Activated T-helper 1 cell treated with anti-CD3 and anti-CD28 coated beads, Interleukin-12 subunit alpha, Interleukin-12 subunit beta, Interleukin-2, Interleukin-4 antibody, amounts not matched to agents 30 ng/mL and 10 ng/mL and 1 ng/mL, durations not matched to agents 14 hours and 24 hours and 36 hours (primary cell): ENCODE measurements at regions of chr1 and their contacts with region 1.

Region 1: GRCh38 chr1:59699227-59699847 is 115.4 kb upstream of the HOOK1 start:
- DNase-seq: no peak
- H3K4me3 Mint-ChIP-seq: no peak overlapping the region
- H3K27ac Mint-ChIP-seq: no peak overlapping the region
- H3K4me1 Mint-ChIP-seq: peaks cover 33% of the 10 kb centered on the region
- H3K27me3 Mint-ChIP-seq: no peaks in the 10 kb centered on the region

Region 2: DNA sequence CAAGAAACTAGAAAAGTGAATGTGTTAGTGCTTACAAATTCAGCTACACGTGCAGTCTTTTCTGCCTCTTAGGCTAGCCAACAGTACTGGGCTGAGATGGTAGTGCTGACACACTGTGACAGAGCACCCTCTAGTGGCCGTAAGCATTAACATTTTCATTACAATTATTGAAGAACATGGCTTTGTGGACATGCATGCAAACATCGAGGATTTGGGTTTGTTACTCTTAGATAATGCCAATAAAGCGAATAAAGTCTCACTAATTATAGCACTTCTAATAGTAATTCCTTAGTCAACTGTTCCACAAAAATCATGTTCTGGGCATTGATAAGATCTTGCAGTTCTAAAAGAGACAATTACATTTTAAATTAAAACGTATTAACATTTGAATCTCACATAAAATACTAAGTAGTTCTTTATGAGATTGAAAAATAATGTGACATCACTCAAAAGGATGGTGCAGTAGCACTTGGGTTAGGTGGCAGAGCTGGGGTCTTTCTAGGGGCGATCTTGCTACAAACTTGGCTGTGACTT is 1046.6 kb before region 1 on chr1:
- intact Hi-C with region 1: loop called (anchors 2 kb)
- DNase-seq: peak; percentile 43
- H3K4me3 Mint-ChIP-seq: no peak overlapping the region
- H3K27ac Mint-ChIP-seq: no peak overlapping the region
- H3K4me1 Mint-ChIP-seq: peaks cover 7% of the 10 kb centered on the region
- H3K27me3 Mint-ChIP-seq: no peaks in the 10 kb centered on the region

Region 3: GRCh38 chr1:58857680-58858673 is 841.4 kb before region 1 on chr1:
- intact Hi-C with region 1: loop called (anchors 2 kb)
- DNase-seq: peak; percentile 43
- H3K4me3 Mint-ChIP-seq: peak overlapping the region; percentile 61
- H3K27ac Mint-ChIP-seq: peak overlapping the region; percentile 95
- H3K4me1 Mint-ChIP-seq: peaks cover 74% of the 10 kb centered on the region
- H3K27me3 Mint-ChIP-seq: no peaks in the 10 kb centered on the region

Region 4: DNA sequence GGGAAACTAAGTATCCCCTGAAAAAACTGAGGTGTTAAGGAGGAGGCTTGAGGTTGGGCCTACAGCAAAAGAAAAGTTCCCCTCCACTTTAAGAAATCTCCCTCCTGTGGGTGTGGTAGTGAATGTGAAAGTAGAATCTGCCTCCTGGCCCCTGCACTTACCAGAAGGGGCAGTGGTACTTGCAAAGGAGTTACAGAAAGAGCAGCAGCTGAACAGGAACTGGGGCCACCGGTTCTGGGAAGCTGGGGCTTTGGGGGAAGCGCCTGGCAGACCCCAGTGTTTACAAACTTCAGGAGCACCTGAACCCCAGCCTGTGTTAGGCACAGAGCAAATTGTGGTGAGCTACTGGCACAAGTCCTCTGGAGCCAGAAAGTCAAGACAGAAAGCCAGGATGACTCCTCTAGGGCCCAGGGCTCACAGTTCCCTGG is 652.6 kb before region 1 on chr1:
- intact Hi-C with region 1: loop called (anchors 1 kb)
- DNase-seq: peak; percentile 62
- H3K4me3 Mint-ChIP-seq: peak overlapping the region; percentile 67
- H3K27ac Mint-ChIP-seq: peak overlapping the region; percentile 71
- H3K4me1 Mint-ChIP-seq: peaks cover 77% of the 10 kb centered on the region
- H3K27me3 Mint-ChIP-seq: no peaks in the 10 kb centered on the region

Region 5: DNA sequence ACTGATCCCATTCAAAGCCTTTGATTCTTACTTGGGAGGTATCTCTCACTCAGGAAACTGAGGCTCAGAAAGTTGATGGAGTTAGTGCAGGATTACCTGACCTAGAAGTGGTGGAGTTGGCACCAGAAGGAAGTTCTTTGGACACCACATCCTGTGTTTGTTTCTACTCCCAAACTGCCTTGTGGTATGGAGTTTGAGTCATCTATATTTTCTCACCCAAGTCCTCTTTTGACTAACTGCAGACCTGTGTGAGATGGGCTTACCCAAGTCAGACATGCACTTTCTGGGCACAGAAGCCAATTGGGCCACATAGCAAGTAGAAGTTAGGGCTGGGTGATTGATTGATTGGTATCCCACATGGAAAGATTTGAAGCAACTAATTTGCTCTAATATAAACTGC is 366.4 kb before region 1 on chr1:
- intact Hi-C with region 1: loop called (anchors 2 kb)
- DNase-seq: peak; percentile 47
- H3K4me3 Mint-ChIP-seq: peak overlapping the region; percentile 15
- H3K27ac Mint-ChIP-seq: peak overlapping the region; percentile 78
- H3K4me1 Mint-ChIP-seq: peaks cover 44% of the 10 kb centered on the region
- H3K27me3 Mint-ChIP-seq: no peaks in the 10 kb centered on the region

Region 6: GRCh38 chr1:59759156-59759925 is 60.0 kb after region 1 on chr1:
- intact Hi-C with region 1: loop called (anchors 1 kb)
- DNase-seq: peak; percentile 63
- H3K4me3 Mint-ChIP-seq: peak overlapping the region; percentile 13
- H3K27ac Mint-ChIP-seq: no peak overlapping the region
- H3K4me1 Mint-ChIP-seq: peaks cover 12% of the 10 kb centered on the region
- H3K27me3 Mint-ChIP-seq: no peaks in the 10 kb centered on the region

Region 7: GRCh38 chr1:59936358-59936821 is 237.1 kb after region 1 on chr1:
- intact Hi-C with region 1: no loop called
- DNase-seq: no peak
- H3K4me3 Mint-ChIP-seq: no peak overlapping the region
- H3K27ac Mint-ChIP-seq: no peak overlapping the region
- H3K4me1 Mint-ChIP-seq: no peaks in the 10 kb centered on the region
- H3K27me3 Mint-ChIP-seq: peaks cover 13% of the 10 kb centered on the region